CD4-positive, alpha-beta memory T cell (primary cell): ENCODE measurements at regions of chr4 and their contacts with region 1.

Region 1: DNA sequence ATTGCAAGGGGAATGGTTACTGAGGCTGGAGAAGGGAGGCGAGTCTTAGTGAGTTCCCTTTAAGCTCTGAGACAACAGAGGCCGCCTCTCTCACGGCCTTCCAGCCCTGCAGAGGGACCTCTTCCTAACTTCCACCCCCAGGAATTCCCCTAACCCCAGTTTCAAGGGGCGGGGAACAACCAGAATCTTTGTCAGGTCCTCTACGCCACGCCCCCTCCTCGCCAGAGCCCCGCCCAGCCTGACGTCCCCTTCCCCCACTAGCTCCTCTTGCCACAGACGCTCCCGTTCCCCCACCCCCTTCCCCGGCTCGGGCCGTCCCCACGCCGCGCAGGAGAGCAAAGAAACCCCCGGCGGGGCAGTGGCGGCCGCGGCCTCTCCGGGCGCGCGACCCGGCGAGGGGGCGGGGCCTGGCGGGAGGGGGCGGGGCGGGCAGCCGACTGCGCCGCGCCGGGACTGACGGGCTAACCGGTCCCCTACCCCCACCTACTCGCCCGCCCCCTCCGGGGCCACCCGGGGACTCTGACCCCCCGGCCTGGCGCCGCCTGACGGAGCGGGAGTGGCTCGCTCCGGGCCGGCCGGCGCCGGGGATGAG is 12.3 kb upstream of the TMEM156 start:
- DNase-seq: peak; percentile 91 to 100 (median 95)
- H3K4me3 ChIP-seq: peak overlapping the region; percentile 18 to 57
- H3K4me3 Mint-ChIP-seq: peak overlapping the region; percentile 87 to 98 (median 92)
- H3K27ac ChIP-seq: peak overlapping the region; percentile 82
- H3K27ac Mint-ChIP-seq: peak overlapping the region; percentile 94 to 98 (median 97)
- H3K4me1 ChIP-seq: peaks cover 46% of the 10 kb centered on the region
- H3K4me1 Mint-ChIP-seq: peaks cover 39 to 60% (median 45%) of the 10 kb centered on the region in 4 donors
- H3K27me3 ChIP-seq: no peaks in the 10 kb centered on the region
- H3K27me3 Mint-ChIP-seq: no peaks in the 10 kb centered on the region

Region 2: DNA sequence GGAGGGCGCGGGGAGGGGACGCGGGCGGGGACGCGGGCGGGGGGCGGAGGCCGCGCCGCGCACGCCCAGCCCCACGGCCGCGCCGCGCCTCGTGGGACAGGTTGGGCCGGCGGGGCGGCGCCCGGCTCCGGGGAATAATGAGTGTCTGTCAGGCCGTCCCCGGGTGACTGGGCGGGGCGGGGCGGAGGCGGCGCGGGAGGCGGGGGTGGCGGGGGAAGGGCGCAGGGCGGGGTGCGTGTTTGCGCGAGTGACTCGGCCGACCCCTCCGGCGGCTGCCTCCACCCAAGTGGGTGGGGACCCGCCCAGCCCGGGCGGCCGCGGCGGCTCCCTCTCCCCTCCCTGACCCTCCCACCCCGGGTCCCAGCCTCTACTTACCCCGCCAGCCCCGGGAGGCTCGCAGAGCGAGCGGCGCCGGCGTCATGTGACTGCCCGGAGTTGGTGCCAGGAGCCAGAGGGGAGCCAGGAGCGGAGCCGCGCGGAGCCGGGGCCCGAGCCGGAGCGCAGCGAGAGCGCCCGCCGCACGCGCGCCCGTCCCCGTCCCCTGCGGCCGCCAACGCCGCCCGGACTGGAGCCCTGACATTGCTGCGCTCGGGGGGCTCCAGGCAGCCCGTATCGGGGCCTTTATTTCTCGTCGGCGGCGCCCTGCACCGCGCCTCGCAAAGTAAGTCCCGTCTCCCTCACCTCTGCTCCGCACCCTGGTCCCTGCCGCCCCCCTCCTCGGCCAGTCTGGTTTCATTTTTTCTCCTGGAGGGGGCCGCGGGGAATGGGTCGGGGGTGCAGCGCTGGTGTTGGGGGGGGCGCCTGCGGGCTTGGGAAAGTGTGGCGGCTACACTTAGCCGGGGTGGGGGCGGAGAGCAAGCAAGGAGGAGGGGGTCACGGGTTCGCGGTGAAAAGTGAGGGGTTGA is 380.4 kb before region 1 on chr4 and contains the start of gene KLF3:
- CTCF ChIA-PET with region 1: no interaction called
- POLR2A ChIA-PET with region 1: interaction called, 3 read pairs
- intact Hi-C with region 1: loop called (anchors 10 kb)
- DNase-seq: peak; percentile 93 to 96 (median 94)
- H3K4me3 ChIP-seq: peak within 1 kb of the TSS; percentile 83 to 92
- H3K4me3 Mint-ChIP-seq: peak within 1 kb of the TSS; percentile 89 to 100 (median 98)
- H3K27ac ChIP-seq: peak within 1 kb of the TSS; percentile 92
- H3K27ac Mint-ChIP-seq: peak within 1 kb of the TSS; percentile 91 to 100 (median 99)
- H3K4me1 ChIP-seq: peaks cover 46% of the 10 kb centered on the region
- H3K4me1 Mint-ChIP-seq: peaks cover 40 to 80% (median 56%) of the 10 kb centered on the region in 4 donors
- H3K27me3 ChIP-seq: no peaks in the 10 kb centered on the region
- H3K27me3 Mint-ChIP-seq: no peaks in the 10 kb centered on the region
- total RNA-seq, gene KLF3: 119 to 122 TPM

Region 3: GRCh38 chr4:38980903-38981676 is 63.4 kb before region 1 on chr4:
- CTCF ChIA-PET with region 1: interaction called, 14 read pairs
- POLR2A ChIA-PET with region 1: interaction called, 21 read pairs
- intact Hi-C with region 1: loop called (anchors 2 kb)
- DNase-seq: no peak
- H3K4me3 ChIP-seq: no peak overlapping the region
- H3K4me3 Mint-ChIP-seq: peak overlapping the region in 2 of 8 donors; percentile 8 to 17
- H3K27ac ChIP-seq: no peak overlapping the region
- H3K27ac Mint-ChIP-seq: peak overlapping the region in 6 of 7 donors; percentile 7 to 89 (median 37)
- H3K4me1 ChIP-seq: peaks cover 19% of the 10 kb centered on the region
- H3K4me1 Mint-ChIP-seq: peaks cover 20 to 30% (median 26%) of the 10 kb centered on the region in 4 donors
- H3K27me3 ChIP-seq: no peaks in the 10 kb centered on the region
- H3K27me3 Mint-ChIP-seq: no peaks in the 10 kb centered on the region

Region 4: DNA sequence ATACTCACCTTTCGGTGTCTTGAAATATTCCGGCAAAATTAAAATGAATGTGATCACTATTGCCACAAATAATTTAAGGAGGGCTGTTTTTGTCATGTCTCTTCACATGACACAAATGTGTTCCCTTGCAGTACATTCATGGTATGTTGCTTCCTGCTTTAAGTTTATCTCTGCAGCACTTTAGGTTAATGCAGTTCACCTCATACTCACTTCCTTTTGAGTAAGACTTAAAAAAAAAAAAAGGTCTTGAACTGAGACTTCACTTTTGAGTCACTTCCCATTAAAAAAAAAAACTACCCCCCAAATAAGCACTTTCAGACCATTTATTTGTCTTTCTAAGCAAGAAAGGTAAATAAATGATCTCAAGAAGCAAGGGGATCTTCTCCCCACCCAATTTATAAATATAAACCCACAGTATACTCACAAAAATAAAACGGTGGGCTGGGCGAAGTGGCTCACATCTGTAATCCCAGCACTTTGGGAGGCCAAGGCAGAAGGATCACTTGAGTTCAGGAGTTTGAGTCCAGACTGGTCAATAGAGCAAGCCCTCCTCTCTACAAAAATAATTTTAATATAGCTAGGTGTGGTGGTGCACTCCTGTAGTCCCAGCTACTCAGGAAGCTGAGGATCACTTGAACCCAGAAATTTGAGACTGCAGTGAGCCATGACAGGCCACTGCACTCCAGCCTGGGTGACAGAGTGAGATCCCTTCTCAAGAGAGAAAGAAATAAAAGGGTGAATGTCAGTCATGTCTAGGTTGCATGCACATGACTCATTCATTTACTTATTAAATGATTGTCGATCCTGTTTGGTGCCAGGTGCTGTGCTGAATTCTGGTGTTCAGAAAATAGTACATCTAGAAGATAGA is 12.0 kb before region 1 on chr4 and contains the start of gene TMEM156:
- CTCF ChIA-PET with region 1: interaction called, 43 read pairs
- POLR2A ChIA-PET with region 1: interaction called, 100 read pairs
- intact Hi-C with region 1: loop called (anchors 1 kb)
- DNase-seq: peak; percentile 65 to 81 (median 70)
- H3K4me3 ChIP-seq: peak within 1 kb of the TSS; percentile 51 to 65
- H3K4me3 Mint-ChIP-seq: peak within 1 kb of the TSS; percentile 75 to 93 (median 89)
- H3K27ac ChIP-seq: peak within 1 kb of the TSS; percentile 68
- H3K27ac Mint-ChIP-seq: peak within 1 kb of the TSS; percentile 85 to 97 (median 93)
- H3K4me1 ChIP-seq: peaks cover 43% of the 10 kb centered on the region
- H3K4me1 Mint-ChIP-seq: peaks cover 20 to 55% (median 36%) of the 10 kb centered on the region in 4 donors
- H3K27me3 ChIP-seq: no peaks in the 10 kb centered on the region
- H3K27me3 Mint-ChIP-seq: no peaks in the 10 kb centered on the region
- total RNA-seq, gene TMEM156: 16.8 to 19.3 TPM

Region 5: DNA sequence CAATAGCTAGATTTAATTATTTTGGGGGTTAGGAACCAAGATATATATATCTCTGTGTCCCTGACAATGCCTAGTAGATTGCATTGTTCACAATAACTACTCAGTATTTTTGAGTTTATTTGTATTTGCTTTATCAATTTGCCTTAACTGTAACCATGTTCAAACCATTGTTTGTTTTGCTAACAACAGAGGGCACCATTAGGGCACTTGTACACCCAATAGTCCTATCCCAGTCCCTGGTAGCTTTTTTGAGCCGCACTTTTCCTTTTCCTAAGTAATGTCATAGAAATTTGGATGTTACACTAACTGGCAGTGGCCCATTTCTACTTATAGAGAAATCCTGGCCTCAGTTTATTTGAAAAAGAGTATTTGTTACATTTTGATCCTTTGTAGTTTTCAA is 17.0 kb after region 1 on chr4:
- CTCF ChIA-PET with region 1: interaction called, 3 read pairs
- POLR2A ChIA-PET with region 1: interaction called, 22 read pairs
- intact Hi-C with region 1: loop called (anchors 2 kb)
- DNase-seq: no peak
- H3K4me3 ChIP-seq: no peak overlapping the region
- H3K4me3 Mint-ChIP-seq: no peak overlapping the region
- H3K27ac ChIP-seq: no peak overlapping the region
- H3K27ac Mint-ChIP-seq: peak overlapping the region in 3 of 7 donors; percentile 27 to 61 (median 60)
- H3K4me1 ChIP-seq: peaks cover 18% of the 10 kb centered on the region
- H3K4me1 Mint-ChIP-seq: peaks cover 30 to 41% (median 32%) of the 10 kb centered on the region in 4 donors
- H3K27me3 ChIP-seq: no peaks in the 10 kb centered on the region
- H3K27me3 Mint-ChIP-seq: no peaks in the 10 kb centered on the region

Region 6: GRCh38 chr4:39134683-39135319 is 90.3 kb after region 1 on chr4:
- CTCF ChIA-PET with region 1: interaction called, 3 read pairs
- POLR2A ChIA-PET with region 1: no interaction called
- intact Hi-C with region 1: loop called (anchors 5 kb)
- DNase-seq: peak in 1 of 5 donors; percentile 5
- H3K4me3 ChIP-seq: no peak overlapping the region
- H3K4me3 Mint-ChIP-seq: no peak overlapping the region
- H3K27ac ChIP-seq: no peak overlapping the region
- H3K27ac Mint-ChIP-seq: peak overlapping the region in 4 of 7 donors; percentile 0 to 63 (median 45)
- H3K4me1 ChIP-seq: peaks cover 10% of the 10 kb centered on the region
- H3K4me1 Mint-ChIP-seq: peaks cover 9 to 12% (median 10%) of the 10 kb centered on the region in 4 donors
- H3K27me3 ChIP-seq: no peaks in the 10 kb centered on the region
- H3K27me3 Mint-ChIP-seq: no peaks in the 10 kb centered on the region

Region 7: GRCh38 chr4:39181905-39182638 is 137.6 kb after region 1 on chr4 and contains the start of gene WDR19:
- CTCF ChIA-PET with region 1: no interaction called
- POLR2A ChIA-PET with region 1: interaction called, 7 read pairs
- intact Hi-C with region 1: loop called (anchors 1 kb)
- DNase-seq: peak; percentile 98 to 99 (median 98)
- H3K4me3 ChIP-seq: peak within 1 kb of the TSS; percentile 78 to 95
- H3K4me3 Mint-ChIP-seq: no peak within 1 kb of the TSS
- H3K27ac ChIP-seq: peak within 1 kb of the TSS; percentile 65
- H3K27ac Mint-ChIP-seq: peak within 1 kb of the TSS in 2 of 7 donors; percentile 4 to 39
- H3K4me1 ChIP-seq: peaks cover 12% of the 10 kb centered on the region
- H3K4me1 Mint-ChIP-seq: peaks cover 3 to 9% (median 5%) of the 10 kb centered on the region in 4 donors
- H3K27me3 ChIP-seq: no peaks in the 10 kb centered on the region
- H3K27me3 Mint-ChIP-seq: peaks cover under 1 to 9% of the 10 kb centered on the region in 2 donors
- total RNA-seq, gene WDR19: 31.6 to 36.8 TPM